Left cardiac atrium (tissue), 4 donors: ENCODE measurements at regions of chr15 and their contacts with region 1.

Region 1: GRCh38 chr15:63599401-63600000 is 2.3 kb downstream of the FBXL22 start:
- DNase-seq: peak; percentile 66
- ATAC-seq: peak; percentile 36 to 44

Region 2: DNA sequence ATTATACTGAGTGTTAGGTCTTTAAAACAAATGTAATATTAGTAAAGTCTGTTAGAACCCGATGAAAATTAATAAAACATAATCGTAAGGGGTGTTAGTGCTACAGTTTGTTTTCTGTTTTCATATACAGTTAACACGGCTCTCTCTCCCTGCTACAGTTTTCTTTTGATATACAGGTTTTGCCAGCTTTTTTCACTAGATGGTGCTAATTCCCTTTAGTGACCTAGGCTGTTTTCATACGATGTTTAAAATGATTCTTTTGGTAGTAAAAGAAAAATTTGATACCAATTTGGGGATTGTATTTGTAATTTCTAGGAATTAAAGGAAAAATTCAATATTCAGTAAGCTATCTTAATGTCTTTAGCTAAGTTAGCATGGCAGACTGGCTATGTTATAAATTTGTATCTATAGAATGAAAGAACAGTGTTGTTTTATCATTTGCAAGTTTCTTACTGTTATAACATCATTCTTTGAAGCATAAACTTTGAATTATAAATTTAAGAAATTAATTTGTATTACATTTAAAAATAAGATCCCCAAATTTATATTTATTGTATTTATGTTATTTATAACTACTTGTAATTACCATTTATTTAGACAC is 310.6 kb before region 1 on chr15:
- intact Hi-C with region 1: loop called in 1 of 2 experiments (anchors 10 kb)
- DNase-seq: no peak
- ATAC-seq: peak; percentile 50 to 61

Region 3: GRCh38 chr15:63396152-63396928 is 203.2 kb before region 1 on chr15:
- intact Hi-C with region 1: no loop called
- DNase-seq: no peak
- ATAC-seq: peak in 1 of 2 donors; percentile 76

Region 4: GRCh38 chr15:63466378-63467192 is 132.9 kb before region 1 on chr15:
- intact Hi-C with region 1: loop called in 1 of 2 experiments (anchors 5 kb)
- DNase-seq: no peak
- ATAC-seq: peak; percentile 83 to 86

Region 5: DNA sequence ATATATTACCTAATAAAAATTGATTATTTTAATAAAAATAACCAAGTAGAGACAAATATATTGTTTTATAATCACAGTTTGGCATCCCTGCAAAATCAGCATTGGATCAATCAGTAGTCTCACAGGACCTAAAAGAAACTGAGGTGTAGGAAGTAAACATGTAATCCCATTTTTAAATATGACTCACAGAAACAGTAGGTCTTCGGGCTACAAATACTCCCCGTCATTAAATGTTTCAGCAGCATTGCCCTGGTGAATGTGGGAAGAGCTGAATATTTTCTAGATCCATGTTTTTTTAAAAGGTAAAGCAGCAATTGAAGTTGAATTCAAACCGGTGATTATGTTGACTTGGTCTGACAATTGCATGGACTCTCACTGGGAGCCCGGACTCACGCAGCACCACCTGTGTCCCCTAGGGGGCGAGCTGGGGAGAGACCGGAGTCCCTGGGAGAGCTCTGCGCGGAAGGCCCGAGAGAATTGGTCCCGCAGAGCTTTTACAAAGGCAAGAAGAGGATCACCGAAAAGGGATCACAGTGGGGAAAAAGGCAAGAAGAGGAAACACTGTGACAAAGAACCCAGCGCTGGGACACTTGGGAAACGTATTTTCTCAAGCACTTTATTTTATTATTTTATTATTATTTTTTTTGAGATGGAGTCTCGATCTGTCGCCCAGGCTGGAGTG is 112.3 kb before region 1 on chr15:
- intact Hi-C with region 1: loop called in 1 of 2 experiments (anchors 5 kb)
- DNase-seq: peak; percentile 90
- ATAC-seq: peak; percentile 86 to 93

Region 6: GRCh38 chr15:63504247-63504978 is 95.1 kb before region 1 on chr15 and contains the start of gene USP3:
- intact Hi-C with region 1: loop called in 1 of 2 experiments (anchors 2 kb)
- DNase-seq: peak; percentile 95
- ATAC-seq: peak; percentile 90
- total RNA-seq, gene USP3: 20.1 to 27.4 TPM

Region 7: DNA sequence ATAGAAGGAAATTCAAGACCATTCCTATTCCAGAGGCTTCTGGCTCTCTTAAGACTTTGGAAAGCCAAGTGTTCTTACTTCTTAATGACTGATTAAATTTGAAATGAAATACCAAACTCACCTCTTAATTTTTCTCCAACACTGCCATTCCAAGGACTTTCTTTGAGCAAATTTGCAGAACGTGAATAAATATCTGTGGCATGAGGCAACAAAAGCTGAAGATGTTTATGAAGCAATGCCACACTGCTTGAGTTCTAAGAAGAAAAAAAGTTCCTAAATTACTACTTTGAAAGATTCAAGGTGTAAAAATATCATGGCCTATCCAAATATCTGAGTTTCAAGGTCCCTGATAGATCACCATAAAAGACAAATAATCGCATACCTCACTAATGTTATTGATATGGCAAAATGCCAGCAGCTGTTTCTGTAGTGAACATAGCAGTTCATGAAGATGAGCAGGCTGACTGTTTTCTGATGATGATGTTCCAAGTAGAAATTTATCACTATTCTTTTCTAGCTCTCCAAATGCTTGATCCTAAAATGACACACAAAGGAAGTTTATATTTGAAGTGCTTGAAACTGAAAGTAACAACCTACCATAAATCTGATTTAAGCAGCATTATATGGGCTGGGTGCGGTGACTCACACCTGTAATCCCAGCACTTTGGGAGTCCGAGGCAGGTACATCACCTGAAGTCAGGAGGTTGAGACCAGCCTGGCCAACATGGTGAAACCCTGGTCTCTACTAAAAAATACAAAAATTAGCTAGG is 129.8 kb after region 1 on chr15:
- intact Hi-C with region 1: no loop called
- DNase-seq: no peak
- ATAC-seq: no peak